IMR-90 (cell line): ENCODE measurements at regions of chr13 and their contacts with region 1.

Region 1: DNA sequence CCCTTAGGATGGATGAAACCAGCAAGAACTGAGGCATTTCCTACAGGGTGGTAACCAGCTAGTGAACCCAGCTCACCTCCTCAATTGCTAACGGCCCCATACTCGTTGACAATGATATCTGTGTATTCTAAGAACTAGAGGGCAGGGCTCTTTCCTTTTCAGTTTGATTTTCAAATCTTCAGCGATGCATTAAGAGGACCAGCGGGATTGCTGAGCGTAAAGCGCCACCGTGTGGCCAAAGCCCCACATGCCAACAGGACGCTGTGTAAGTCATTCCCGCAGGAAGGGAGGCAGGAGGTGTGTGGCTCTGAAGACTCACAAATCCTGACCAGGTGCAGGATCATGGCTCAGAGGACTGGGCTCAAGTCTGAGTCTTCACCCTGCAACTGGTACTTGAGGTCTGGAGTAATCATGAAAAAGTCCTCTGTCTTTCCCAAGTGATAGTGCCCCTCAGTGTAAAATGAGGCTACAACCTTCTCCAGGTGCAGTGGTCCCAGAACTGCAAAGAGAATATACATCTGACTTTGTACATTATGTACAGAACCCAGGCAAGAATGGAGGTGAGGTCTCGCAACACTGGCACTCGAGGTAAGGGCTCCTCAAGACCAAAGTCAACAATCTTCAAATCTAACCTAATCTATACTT is 40.9 kb downstream of the C13orf42 start:
- DNase-seq: peak; percentile 72
- ATAC-seq: peak; percentile 95
- H3K4me3 ChIP-seq: no peak overlapping the region
- H3K27ac ChIP-seq: no peak overlapping the region
- H3K4me1 ChIP-seq: peaks cover 1% of the 10 kb centered on the region; the same call in 1 of the 2 replicates
- H3K27me3 ChIP-seq: peaks cover 27% of the 10 kb centered on the region
- CTCF ChIP-seq: peak; percentile 93
- POLR2A ChIP-seq: peak; percentile 54; the same call in 1 of the 2 replicates
- RAD21 ChIP-seq: peak; percentile 98

Region 2: GRCh38 chr13:49976314-49977258 is 1093.5 kb before region 1 on chr13:
- CTCF ChIA-PET with region 1: interaction called, 3 read pairs
- POLR2A ChIA-PET with region 1: no interaction called
- dilution Hi-C with region 1: no loop called
- in situ Hi-C with region 1: loop called (anchors 10 kb)
- intact Hi-C with region 1: loop called (anchors 2 kb)
- DNase-seq: peak; percentile 70
- ATAC-seq: peak; percentile 86
- H3K4me3 ChIP-seq: no peak overlapping the region
- H3K27ac ChIP-seq: no peak overlapping the region
- H3K4me1 ChIP-seq: peaks cover 4% of the 10 kb centered on the region
- H3K27me3 ChIP-seq: no peaks in the 10 kb centered on the region
- CTCF ChIP-seq: peak; percentile 86
- POLR2A ChIP-seq: no peak
- RAD21 ChIP-seq: peak; percentile 94

Region 3: DNA sequence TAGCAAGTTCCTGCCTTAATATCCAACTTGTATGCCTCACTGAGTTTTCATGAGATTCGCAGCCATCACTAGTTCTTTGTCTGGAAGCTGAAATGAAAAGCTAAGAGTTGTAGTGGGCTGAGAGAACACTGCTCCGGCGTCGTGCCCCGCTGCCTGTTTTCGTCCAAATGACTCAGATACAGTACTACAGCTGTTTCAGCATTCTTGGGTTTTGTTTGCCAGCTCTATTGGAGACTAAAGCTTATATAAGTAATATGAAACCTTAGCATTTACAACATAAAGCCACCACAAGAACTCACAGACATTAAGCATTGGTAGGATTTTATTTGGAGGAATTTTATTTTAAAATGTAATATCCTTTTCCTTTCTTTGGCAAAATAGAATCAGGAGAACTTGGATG is 526.3 kb before region 1 on chr13:
- CTCF ChIA-PET with region 1: no interaction called
- POLR2A ChIA-PET with region 1: no interaction called
- dilution Hi-C with region 1: no loop called
- in situ Hi-C with region 1: no loop called
- intact Hi-C with region 1: loop called (anchors 5 kb)
- DNase-seq: peak; percentile 91
- ATAC-seq: peak; percentile 99
- H3K4me3 ChIP-seq: no peak overlapping the region
- H3K27ac ChIP-seq: no peak overlapping the region; the same call in 1 of the 2 replicates
- H3K4me1 ChIP-seq: no peaks in the 10 kb centered on the region; the same call in 1 of the 2 replicates
- H3K27me3 ChIP-seq: no peaks in the 10 kb centered on the region; the same call in 1 of the 2 replicates
- CTCF ChIP-seq: no peak
- POLR2A ChIP-seq: no peak
- RAD21 ChIP-seq: no peak

Region 4: DNA sequence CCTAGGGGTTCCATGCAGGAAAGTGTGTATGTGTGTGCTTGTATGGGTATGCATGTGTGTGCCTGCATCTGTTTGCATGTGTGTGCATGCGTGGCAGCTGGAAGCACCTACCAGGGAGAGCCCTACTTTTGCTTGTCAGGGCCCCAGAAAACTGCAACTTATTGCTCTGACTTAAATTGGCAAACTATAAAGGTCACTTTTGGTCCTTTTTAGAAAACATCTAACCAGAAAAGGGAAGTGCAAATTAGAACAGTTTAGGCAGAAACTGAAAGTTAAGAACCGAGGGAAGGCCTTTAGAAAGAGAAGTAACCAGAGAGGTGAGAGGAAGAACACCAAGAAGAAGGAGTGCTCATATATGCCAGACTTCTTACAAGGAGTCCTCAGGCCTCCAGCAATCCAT is 259.1 kb before region 1 on chr13:
- CTCF ChIA-PET with region 1: interaction called, 3 read pairs
- POLR2A ChIA-PET with region 1: no interaction called
- dilution Hi-C with region 1: no loop called
- in situ Hi-C with region 1: no loop called
- intact Hi-C with region 1: loop called (anchors 2 kb)
- DNase-seq: no peak
- ATAC-seq: no peak
- H3K4me3 ChIP-seq: no peak overlapping the region
- H3K27ac ChIP-seq: no peak overlapping the region
- H3K4me1 ChIP-seq: no peaks in the 10 kb centered on the region
- H3K27me3 ChIP-seq: peaks cover 9% of the 10 kb centered on the region
- CTCF ChIP-seq: no peak
- POLR2A ChIP-seq: no peak
- RAD21 ChIP-seq: no peak